ENCODE measurements at regions of chr5 and their contacts with region 1.

Region 1: GRCh38 chr5:153964880-153965645 is 73.6 kb downstream of the FAM114A2 start:
- DNase-seq: peak; percentile 55
- ATAC-seq: peak; percentile 74
- H3K4me3 Mint-ChIP-seq: no peak overlapping the region
- H3K27ac Mint-ChIP-seq: no peak overlapping the region
- H3K4me1 Mint-ChIP-seq: peaks cover 11% of the 10 kb centered on the region
- H3K27me3 Mint-ChIP-seq: peaks cover 3% of the 10 kb centered on the region
- CTCF ChIP-seq: peak; percentile 84

Region 2: DNA sequence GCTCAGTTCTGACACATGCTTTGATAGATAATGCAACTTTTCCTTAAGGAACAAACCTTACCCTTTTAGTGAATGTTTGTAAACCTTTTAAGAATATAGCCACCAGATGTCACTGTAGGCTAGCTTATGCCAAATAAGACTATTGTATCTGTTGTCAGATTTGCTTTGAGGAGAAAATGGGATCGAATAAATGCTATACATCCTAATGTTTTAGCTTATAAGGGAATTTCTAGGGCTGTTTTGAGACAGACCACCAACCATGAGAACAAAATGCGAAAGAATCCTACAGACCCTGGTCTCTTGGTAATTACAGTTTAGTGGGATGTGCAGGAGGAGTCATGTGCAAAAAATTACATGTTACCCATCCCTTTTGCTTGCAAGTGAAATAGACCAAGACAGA is 1432.3 kb before region 1 on chr5:
- CTCF ChIA-PET with region 1: interaction called, 11 read pairs
- POLR2A ChIA-PET with region 1: no interaction called
- intact Hi-C with region 1: loop called (anchors 10 kb)
- DNase-seq: no peak
- ATAC-seq: no peak
- H3K4me3 Mint-ChIP-seq: no peak overlapping the region
- H3K27ac Mint-ChIP-seq: no peak overlapping the region
- H3K4me1 Mint-ChIP-seq: peaks cover 4% of the 10 kb centered on the region
- H3K27me3 Mint-ChIP-seq: peaks cover 3% of the 10 kb centered on the region
- CTCF ChIP-seq: peak; percentile 40

Region 3: GRCh38 chr5:153496835-153497234 is 468.2 kb before region 1 on chr5:
- CTCF ChIA-PET with region 1: interaction called, 3 read pairs
- POLR2A ChIA-PET with region 1: no interaction called
- intact Hi-C with region 1: loop called (anchors 10 kb)
- DNase-seq: no peak
- ATAC-seq: no peak
- H3K4me3 Mint-ChIP-seq: no peak overlapping the region
- H3K27ac Mint-ChIP-seq: no peak overlapping the region
- H3K4me1 Mint-ChIP-seq: no peaks in the 10 kb centered on the region
- H3K27me3 Mint-ChIP-seq: peaks cover 11% of the 10 kb centered on the region
- CTCF ChIP-seq: no peak

Region 4: DNA sequence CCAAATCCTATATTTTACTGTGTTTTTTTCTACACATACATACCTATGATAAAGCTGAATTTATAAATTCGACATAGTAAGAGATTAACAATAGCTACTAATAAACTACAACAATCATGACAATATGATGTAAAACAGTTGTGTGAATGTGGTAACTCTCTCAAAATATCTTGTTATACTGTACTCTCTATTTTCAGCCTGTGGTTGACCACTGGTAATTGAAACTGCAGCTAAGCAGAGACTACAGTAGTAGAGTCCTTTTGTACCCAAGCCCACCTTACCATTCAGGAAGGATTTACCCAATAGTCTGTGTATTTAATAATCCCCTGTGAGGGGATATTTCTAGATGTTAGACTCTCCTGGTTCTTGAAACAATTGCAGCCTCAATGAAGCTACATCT is 13.0 kb before region 1 on chr5:
- CTCF ChIA-PET with region 1: interaction called, 12 read pairs
- POLR2A ChIA-PET with region 1: no interaction called
- intact Hi-C with region 1: no loop called
- DNase-seq: no peak
- ATAC-seq: no peak
- H3K4me3 Mint-ChIP-seq: no peak overlapping the region
- H3K27ac Mint-ChIP-seq: no peak overlapping the region
- H3K4me1 Mint-ChIP-seq: no peaks in the 10 kb centered on the region
- H3K27me3 Mint-ChIP-seq: no peaks in the 10 kb centered on the region
- CTCF ChIP-seq: no peak

Measured in activated CD8-positive, alpha-beta T cell treated with anti-CD3 and anti-CD28 coated beads for 36 hours (primary cell).